ENCODE measurements at regions of chr9 and their contacts with region 1.

Region 1: DNA sequence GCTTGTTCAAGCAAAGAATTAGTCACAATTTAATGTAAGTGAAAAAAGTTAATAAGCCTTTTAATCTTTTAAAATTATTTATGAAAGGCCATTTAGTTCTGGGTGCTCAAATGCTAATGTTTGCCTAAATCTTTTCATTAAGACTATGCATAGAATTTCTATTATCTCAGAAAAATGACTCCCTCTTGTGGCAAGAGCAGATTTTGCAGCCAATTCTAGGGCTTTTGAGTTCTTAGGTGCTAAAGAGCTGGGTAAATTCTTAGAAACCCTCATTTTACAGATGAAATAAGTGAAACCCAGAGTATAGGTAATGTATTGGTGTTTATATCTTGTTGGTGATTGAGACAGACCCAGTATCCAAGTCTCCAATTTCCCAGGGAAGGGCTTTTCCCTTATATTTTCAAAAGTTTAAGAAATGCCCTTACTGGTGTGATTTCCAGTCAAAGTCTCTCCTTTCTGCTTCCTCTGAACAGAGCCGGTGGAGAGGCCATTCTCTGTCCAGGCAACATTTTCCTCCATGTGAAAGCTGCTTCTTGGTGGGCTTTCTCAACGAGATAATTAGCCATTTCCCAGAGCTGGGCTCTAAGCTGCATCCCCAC is 24.1 kb upstream of the PCSK5 start:
- DNase-seq: no peak
- ATAC-seq: peak; percentile 76
- H3K4me3 ChIP-seq: no peak overlapping the region
- H3K27ac ChIP-seq: no peak overlapping the region
- H3K4me1 ChIP-seq: no peaks in the 10 kb centered on the region
- H3K27me3 ChIP-seq: no peaks in the 10 kb centered on the region; a peak in 1 of 4 replicates
- CTCF ChIP-seq: peak; percentile 55 to 63 (median 58); a peak in 5 of 6 replicates
- EP300 ChIP-seq: no peak
- POLR2A ChIP-seq: no peak
- RAD21 ChIP-seq: peak; percentile 72

Region 2: DNA sequence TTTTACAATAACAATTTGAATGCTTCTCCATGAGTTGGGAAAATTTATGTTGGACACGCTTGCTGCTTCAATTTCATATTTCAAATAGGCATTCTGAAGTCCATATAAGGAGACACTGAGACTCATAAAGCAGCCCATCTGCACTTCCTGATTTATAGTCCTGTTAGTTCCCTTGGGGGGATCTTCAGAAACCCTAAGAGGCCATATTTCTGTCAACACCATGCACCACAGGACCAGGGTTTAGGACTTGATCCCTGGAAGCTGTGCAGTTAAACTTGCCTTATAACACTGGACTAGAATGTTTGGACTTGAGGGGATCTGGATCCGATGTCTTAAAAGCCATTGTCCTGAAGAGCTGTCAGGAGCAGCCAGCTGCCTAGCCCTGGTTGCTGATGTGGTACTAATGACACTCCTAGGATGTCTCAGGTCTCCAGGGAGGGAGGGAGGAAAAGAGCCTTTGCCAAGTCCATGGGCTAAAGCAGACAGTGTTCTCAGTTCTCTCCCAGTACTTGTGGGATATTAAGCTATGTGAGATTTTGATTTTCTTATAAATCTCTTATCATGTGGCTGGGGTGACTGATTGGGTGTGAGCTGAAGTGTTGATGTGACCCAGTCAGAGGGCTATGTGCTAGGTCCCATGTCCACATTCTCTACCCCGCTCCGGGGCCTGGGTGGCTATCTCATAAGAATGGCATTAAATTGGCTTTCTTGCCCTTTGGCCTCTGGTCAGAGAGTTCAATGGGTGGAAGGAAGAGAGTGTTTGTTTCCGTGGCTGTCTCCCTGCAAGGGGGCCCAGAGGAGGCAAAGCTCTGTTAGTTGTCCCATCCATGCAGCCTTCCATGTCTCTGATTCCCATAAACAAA is 378.3 kb before region 1 on chr9:
- CTCF ChIA-PET with region 1: no interaction called
- POLR2A ChIA-PET with region 1: no interaction called
- RAD21 ChIA-PET with region 1: no interaction called
- SMC1A ChIA-PET with region 1: no interaction called
- in situ Hi-C with region 1: no loop called
- intact Hi-C with region 1: loop called (anchors 10 kb)
- DNase-seq: no peak
- ATAC-seq: no peak
- H3K4me3 ChIP-seq: no peak overlapping the region
- H3K27ac ChIP-seq: no peak overlapping the region
- H3K4me1 ChIP-seq: no peaks in the 10 kb centered on the region
- H3K27me3 ChIP-seq: no peaks in the 10 kb centered on the region
- CTCF ChIP-seq: no peak
- EP300 ChIP-seq: no peak
- POLR2A ChIP-seq: no peak
- RAD21 ChIP-seq: no peak

Region 3: DNA sequence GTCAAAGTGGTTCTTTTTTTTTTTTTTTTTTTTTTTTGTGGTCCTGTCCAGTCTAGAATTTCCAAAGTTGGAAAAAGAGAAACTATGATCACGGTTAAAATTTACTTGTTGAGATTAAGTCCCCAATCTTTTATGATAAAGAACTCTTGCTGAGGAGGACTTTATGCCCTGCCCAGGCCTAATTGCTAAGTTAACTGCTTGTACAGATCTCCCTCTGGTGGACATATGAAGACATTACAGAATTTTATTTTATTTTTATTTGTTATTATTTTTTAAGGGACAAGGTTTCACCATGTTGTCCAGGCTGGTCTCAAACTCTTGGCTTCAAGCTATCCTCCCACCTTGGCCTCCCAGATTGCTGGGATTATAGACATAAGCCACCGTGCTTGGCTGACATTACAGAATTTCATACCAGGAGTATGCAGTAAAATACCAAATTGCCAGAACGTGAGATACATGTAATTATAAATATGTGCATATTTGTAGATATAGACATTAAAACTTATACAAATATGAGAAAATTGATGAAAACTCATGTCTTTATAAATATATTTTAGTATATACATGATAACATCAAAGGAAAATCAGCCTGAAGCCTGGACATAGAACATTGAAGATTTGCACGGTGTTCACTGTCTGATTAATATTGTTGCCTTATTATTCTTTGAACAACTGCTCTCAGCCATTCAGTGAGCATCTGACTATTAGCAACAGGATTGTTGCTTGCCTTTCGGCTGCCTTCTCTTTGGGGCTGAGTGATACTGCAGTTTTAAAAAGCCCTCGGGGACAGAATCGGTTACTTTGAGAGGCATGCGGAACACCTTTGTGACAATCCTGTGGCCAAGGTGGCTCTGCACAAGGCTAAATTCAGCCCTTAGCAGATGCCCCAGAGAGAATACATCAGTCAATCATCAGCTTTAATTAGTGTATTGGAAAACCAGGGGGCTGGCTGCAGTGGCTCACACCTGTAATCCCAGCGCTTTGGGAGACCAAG is 436.9 kb after region 1 on chr9:
- CTCF ChIA-PET with region 1: interaction called, 3 read pairs
- POLR2A ChIA-PET with region 1: no interaction called
- RAD21 ChIA-PET with region 1: no interaction called
- SMC1A ChIA-PET with region 1: interaction called, 3 read pairs
- in situ Hi-C with region 1: no loop called
- intact Hi-C with region 1: loop called (anchors 5 kb)
- DNase-seq: no peak
- ATAC-seq: peak; percentile 75
- H3K4me3 ChIP-seq: no peak overlapping the region
- H3K27ac ChIP-seq: no peak overlapping the region
- H3K4me1 ChIP-seq: no peaks in the 10 kb centered on the region
- H3K27me3 ChIP-seq: peaks cover 0 to 2% of the 10 kb centered on the region in 2 experiments; a peak in 2 of 4 replicates
- CTCF ChIP-seq: peak; percentile 47 to 52 (median 47); a peak in 4 of 6 replicates
- EP300 ChIP-seq: no peak
- POLR2A ChIP-seq: no peak
- RAD21 ChIP-seq: peak; percentile 91

Region 4: GRCh38 chr9:77673941-77674791 is 1807.8 kb after region 1 on chr9:
- CTCF ChIA-PET with region 1: no interaction called
- POLR2A ChIA-PET with region 1: no interaction called
- RAD21 ChIA-PET with region 1: no interaction called
- SMC1A ChIA-PET with region 1: no interaction called
- in situ Hi-C with region 1: no loop called
- intact Hi-C with region 1: no loop called
- DNase-seq: no peak
- ATAC-seq: no peak
- H3K4me3 ChIP-seq: no peak overlapping the region
- H3K27ac ChIP-seq: no peak overlapping the region
- H3K4me1 ChIP-seq: no peaks in the 10 kb centered on the region
- H3K27me3 ChIP-seq: no peaks in the 10 kb centered on the region; a peak in 1 of 4 replicates
- CTCF ChIP-seq: no peak
- EP300 ChIP-seq: no peak
- POLR2A ChIP-seq: no peak
- RAD21 ChIP-seq: no peak

Measured in GM12878 (cell line).